Esophagus muscularis mucosa (tissue), 4 donors: ENCODE measurements at regions of chr3 and their contacts with region 1.

Region 1: GRCh38 chr3:172061724-172062184 is 22.4 kb downstream of the FNDC3B start:
- DNase-seq: no peak
- H3K4me3 ChIP-seq: peak overlapping the region in 3 of 4 donors; percentile 12 to 26 (median 24)
- H3K27ac ChIP-seq: peak overlapping the region in 2 of 4 donors; percentile 12
- H3K4me1 ChIP-seq: peaks cover 60 to 90% (median 87%) of the 10 kb centered on the region in 4 donors
- H3K27me3 ChIP-seq: no peaks in the 10 kb centered on the region
- CTCF ChIP-seq: no peak
- EP300 ChIP-seq: no peak
- POLR2A ChIP-seq: no peak

Region 2: GRCh38 chr3:171809821-171810628 is 251.7 kb before region 1 on chr3 and contains the start of gene PLD1:
- intact Hi-C with region 1: loop called (anchors 10 kb)
- DNase-seq: peak; percentile 96
- H3K4me3 ChIP-seq: peak within 1 kb of the TSS; percentile 67 to 79 (median 72)
- H3K27ac ChIP-seq: peak within 1 kb of the TSS; percentile 88 to 94 (median 92)
- H3K4me1 ChIP-seq: peaks cover 27 to 47% (median 43%) of the 10 kb centered on the region in 4 donors
- H3K27me3 ChIP-seq: no peaks in the 10 kb centered on the region
- CTCF ChIP-seq: no peak
- EP300 ChIP-seq: no peak
- POLR2A ChIP-seq: peak; percentile 40
- total RNA-seq, gene PLD1: 12.4 to 21.1 (median 18.5) TPM

Region 3: GRCh38 chr3:172766241-172766640 is 704.5 kb after region 1 on chr3:
- intact Hi-C with region 1: no loop called
- DNase-seq: no peak
- H3K4me3 ChIP-seq: no peak overlapping the region
- H3K27ac ChIP-seq: no peak overlapping the region
- H3K4me1 ChIP-seq: no peaks in the 10 kb centered on the region
- H3K27me3 ChIP-seq: no peaks in the 10 kb centered on the region
- CTCF ChIP-seq: no peak
- EP300 ChIP-seq: no peak
- POLR2A ChIP-seq: no peak